OCI-LY7 (cell line): ENCODE measurements at regions of chr6 and their contacts with region 1.

Region 1: DNA sequence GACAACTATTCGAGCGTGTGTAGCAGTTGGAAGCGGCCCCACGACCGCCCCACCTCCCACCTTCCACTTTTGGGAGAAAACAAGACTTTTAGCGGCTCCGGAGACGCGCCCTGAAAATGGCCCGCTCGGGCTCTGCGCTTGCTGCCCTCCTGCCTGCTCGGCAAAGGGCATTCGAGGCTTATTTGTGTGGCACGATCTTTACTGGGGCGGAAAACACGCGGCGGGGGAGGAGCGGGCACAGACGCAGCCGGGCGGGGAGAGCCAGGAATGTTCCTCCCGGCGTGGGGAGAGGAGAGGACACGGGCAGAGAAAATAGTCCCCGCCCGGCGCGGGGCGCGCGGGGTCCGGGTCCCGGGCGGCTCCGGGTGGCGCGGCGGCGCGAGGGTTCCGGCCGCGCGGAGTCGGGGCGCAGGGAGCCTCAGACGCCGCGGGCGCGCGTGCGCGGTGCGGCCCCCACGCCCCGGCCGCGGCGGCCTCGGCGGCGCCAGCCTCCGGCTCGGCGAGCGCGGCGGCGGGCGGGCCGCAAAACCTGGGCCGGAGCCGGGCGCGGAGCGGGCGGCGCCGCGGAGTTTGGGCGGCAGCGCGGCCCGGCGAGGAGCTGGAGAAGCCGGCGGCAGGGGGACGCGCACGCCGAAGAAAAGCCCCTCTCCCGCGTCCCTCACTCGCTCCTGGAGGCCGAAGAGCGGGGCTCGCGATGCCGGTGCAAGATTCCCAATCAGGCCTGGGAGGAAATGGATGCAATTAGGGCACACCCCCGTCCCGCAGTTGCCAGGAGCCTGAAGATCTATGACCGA is 90.0 kb upstream of the ARID1B start:
- DNase-seq: peak; percentile 89
- H3K4me3 ChIP-seq: peak overlapping the region; percentile 73
- H3K27ac ChIP-seq: peak overlapping the region; percentile 92
- H3K4me1 ChIP-seq: peaks cover 57% of the 10 kb centered on the region
- CTCF ChIP-seq: no peak

Region 2: GRCh38 chr6:156634951-156635371 is 52.2 kb before region 1 on chr6:
- CTCF ChIA-PET with region 1: no interaction called
- POLR2A ChIA-PET with region 1: interaction called, 23 read pairs
- intact Hi-C with region 1: loop called (anchors 1 kb)
- DNase-seq: peak; percentile 25
- H3K4me3 ChIP-seq: no peak overlapping the region
- H3K27ac ChIP-seq: peak overlapping the region; percentile 90
- H3K4me1 ChIP-seq: peaks cover 51% of the 10 kb centered on the region
- CTCF ChIP-seq: no peak

Region 3: GRCh38 chr6:156719720-156720563 is 32.8 kb after region 1 on chr6:
- CTCF ChIA-PET with region 1: interaction called, 5 read pairs
- POLR2A ChIA-PET with region 1: interaction called, 3 read pairs
- intact Hi-C with region 1: loop called (anchors 2 kb)
- DNase-seq: peak; percentile 64
- H3K4me3 ChIP-seq: peak overlapping the region; percentile 42
- H3K27ac ChIP-seq: peak overlapping the region; percentile 45
- H3K4me1 ChIP-seq: peaks cover 28% of the 10 kb centered on the region
- CTCF ChIP-seq: no peak

Region 4: GRCh38 chr6:156852132-156852857 is 165.1 kb after region 1 on chr6:
- CTCF ChIA-PET with region 1: no interaction called
- POLR2A ChIA-PET with region 1: no interaction called
- intact Hi-C with region 1: loop called (anchors 2 kb)
- DNase-seq: peak; percentile 90
- H3K4me3 ChIP-seq: peak overlapping the region; percentile 43
- H3K27ac ChIP-seq: peak overlapping the region; percentile 67
- H3K4me1 ChIP-seq: peaks cover 83% of the 10 kb centered on the region
- CTCF ChIP-seq: no peak